ENCODE measurements at regions of chr2 and their contacts with region 1.

Region 1: GRCh38 chr2:11129598-11130449 is 25.4 kb upstream of the SLC66A3 start:
- DNase-seq: peak; percentile 73 to 88 (median 79)
- H3K4me3 ChIP-seq: peak overlapping the region; percentile 49
- H3K4me3 Mint-ChIP-seq: peak overlapping the region; percentile 79 to 93 (median 82)
- H3K27ac ChIP-seq: no peak overlapping the region
- H3K27ac Mint-ChIP-seq: peak overlapping the region; percentile 78 to 92 (median 89)
- H3K4me1 ChIP-seq: peaks cover 22% of the 10 kb centered on the region
- H3K4me1 Mint-ChIP-seq: peaks cover 25 to 52% (median 40%) of the 10 kb centered on the region in 3 donors
- H3K27me3 ChIP-seq: no peaks in the 10 kb centered on the region
- H3K27me3 Mint-ChIP-seq: peaks cover 0 to 2% of the 10 kb centered on the region in 2 donors

Region 2: GRCh38 chr2:11103984-11104793 is 25.6 kb before region 1 on chr2:
- CTCF ChIA-PET with region 1: interaction called, 10 read pairs
- POLR2A ChIA-PET with region 1: no interaction called
- DNase-seq: peak in 2 of 5 donors; percentile 28 to 70
- H3K4me3 ChIP-seq: peak overlapping the region; percentile 28
- H3K4me3 Mint-ChIP-seq: peak overlapping the region; percentile 23 to 91 (median 78)
- H3K27ac ChIP-seq: no peak overlapping the region
- H3K27ac Mint-ChIP-seq: peak overlapping the region; percentile 55 to 88 (median 70)
- H3K4me1 ChIP-seq: peaks cover 19% of the 10 kb centered on the region
- H3K4me1 Mint-ChIP-seq: peaks cover 22 to 45% (median 37%) of the 10 kb centered on the region in 3 donors
- H3K27me3 ChIP-seq: no peaks in the 10 kb centered on the region
- H3K27me3 Mint-ChIP-seq: peaks cover 0 to 4% of the 10 kb centered on the region in 2 donors

Region 3: GRCh38 chr2:11140492-11140891 is 10.7 kb after region 1 on chr2:
- CTCF ChIA-PET with region 1: interaction called, 11 read pairs
- POLR2A ChIA-PET with region 1: no interaction called
- DNase-seq: no peak
- H3K4me3 ChIP-seq: no peak overlapping the region
- H3K4me3 Mint-ChIP-seq: no peak overlapping the region
- H3K27ac ChIP-seq: no peak overlapping the region
- H3K27ac Mint-ChIP-seq: no peak overlapping the region
- H3K4me1 ChIP-seq: no peaks in the 10 kb centered on the region
- H3K4me1 Mint-ChIP-seq: no peaks in the 10 kb centered on the region
- H3K27me3 ChIP-seq: no peaks in the 10 kb centered on the region
- H3K27me3 Mint-ChIP-seq: peaks cover 13 to 37% of the 10 kb centered on the region in 2 donors

Region 4: GRCh38 chr2:11160731-11161455 is 31.1 kb after region 1 on chr2:
- CTCF ChIA-PET with region 1: interaction called, 30 read pairs
- POLR2A ChIA-PET with region 1: interaction called, 13 read pairs
- DNase-seq: no peak
- H3K4me3 ChIP-seq: no peak overlapping the region
- H3K4me3 Mint-ChIP-seq: peak overlapping the region; percentile 32 to 83 (median 52)
- H3K27ac ChIP-seq: no peak overlapping the region
- H3K27ac Mint-ChIP-seq: peak overlapping the region; percentile 52 to 87 (median 80)
- H3K4me1 ChIP-seq: peaks cover 21% of the 10 kb centered on the region
- H3K4me1 Mint-ChIP-seq: peaks cover 22 to 35% (median 27%) of the 10 kb centered on the region in 3 donors
- H3K27me3 ChIP-seq: no peaks in the 10 kb centered on the region
- H3K27me3 Mint-ChIP-seq: no peaks in the 10 kb centered on the region

Region 5: GRCh38 chr2:11305958-11306357 is 176.1 kb after region 1 on chr2:
- CTCF ChIA-PET with region 1: no interaction called
- POLR2A ChIA-PET with region 1: no interaction called
- DNase-seq: no peak
- H3K4me3 ChIP-seq: no peak overlapping the region
- H3K4me3 Mint-ChIP-seq: no peak overlapping the region
- H3K27ac ChIP-seq: no peak overlapping the region
- H3K27ac Mint-ChIP-seq: no peak overlapping the region
- H3K4me1 ChIP-seq: peaks cover 7% of the 10 kb centered on the region
- H3K4me1 Mint-ChIP-seq: peaks cover 18 to 26% (median 25%) of the 10 kb centered on the region in 3 donors
- H3K27me3 ChIP-seq: no peaks in the 10 kb centered on the region
- H3K27me3 Mint-ChIP-seq: no peaks in the 10 kb centered on the region

Region 6: DNA sequence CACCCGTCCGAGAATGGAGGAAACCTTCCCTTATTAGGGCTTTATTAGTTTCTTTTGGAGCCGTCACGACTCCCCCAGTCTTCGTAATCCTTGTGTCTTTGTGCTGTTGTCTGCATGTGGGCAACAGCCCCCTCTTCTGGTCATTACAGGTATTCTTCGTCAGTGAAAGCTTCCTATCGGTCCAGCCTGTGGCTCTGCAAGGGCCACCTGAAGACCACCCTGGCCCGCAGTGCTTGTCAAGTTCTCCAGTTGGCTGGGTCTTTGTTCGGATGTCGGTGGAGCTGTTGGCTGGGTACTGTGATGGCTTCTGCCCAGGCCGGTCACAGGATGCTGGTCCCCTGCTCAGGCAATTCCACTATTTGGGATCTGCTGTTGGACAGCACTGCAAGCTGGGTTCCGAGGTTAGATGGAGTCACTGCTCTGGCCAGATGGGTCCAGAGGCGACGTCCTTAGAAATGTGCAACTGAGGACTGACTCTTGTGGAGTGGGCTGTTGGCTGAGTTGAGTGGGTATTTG is 317.0 kb after region 1 on chr2:
- CTCF ChIA-PET with region 1: interaction called, 47 read pairs
- POLR2A ChIA-PET with region 1: no interaction called
- DNase-seq: peak; percentile 8 to 59 (median 42)
- H3K4me3 ChIP-seq: no peak overlapping the region
- H3K4me3 Mint-ChIP-seq: no peak overlapping the region
- H3K27ac ChIP-seq: no peak overlapping the region
- H3K27ac Mint-ChIP-seq: peak overlapping the region in 1 of 8 donors; percentile 38
- H3K4me1 ChIP-seq: no peaks in the 10 kb centered on the region
- H3K4me1 Mint-ChIP-seq: no peaks in the 10 kb centered on the region
- H3K27me3 ChIP-seq: no peaks in the 10 kb centered on the region
- H3K27me3 Mint-ChIP-seq: no peaks in the 10 kb centered on the region

Region 7: GRCh38 chr2:11583840-11584524 is 454.2 kb after region 1 on chr2:
- CTCF ChIA-PET with region 1: interaction called, 54 read pairs
- POLR2A ChIA-PET with region 1: no interaction called
- DNase-seq: peak; percentile 7 to 54 (median 14)
- H3K4me3 ChIP-seq: no peak overlapping the region
- H3K4me3 Mint-ChIP-seq: no peak overlapping the region
- H3K27ac ChIP-seq: no peak overlapping the region
- H3K27ac Mint-ChIP-seq: no peak overlapping the region
- H3K4me1 ChIP-seq: no peaks in the 10 kb centered on the region
- H3K4me1 Mint-ChIP-seq: peaks cover 0 to 8% (median 0%) of the 10 kb centered on the region in 3 donors
- H3K27me3 ChIP-seq: no peaks in the 10 kb centered on the region
- H3K27me3 Mint-ChIP-seq: peaks cover 6 to 11% of the 10 kb centered on the region in 2 donors